PC-3 (cell line): ENCODE measurements at regions of chr6 and their contacts with region 1.

Region 1: DNA sequence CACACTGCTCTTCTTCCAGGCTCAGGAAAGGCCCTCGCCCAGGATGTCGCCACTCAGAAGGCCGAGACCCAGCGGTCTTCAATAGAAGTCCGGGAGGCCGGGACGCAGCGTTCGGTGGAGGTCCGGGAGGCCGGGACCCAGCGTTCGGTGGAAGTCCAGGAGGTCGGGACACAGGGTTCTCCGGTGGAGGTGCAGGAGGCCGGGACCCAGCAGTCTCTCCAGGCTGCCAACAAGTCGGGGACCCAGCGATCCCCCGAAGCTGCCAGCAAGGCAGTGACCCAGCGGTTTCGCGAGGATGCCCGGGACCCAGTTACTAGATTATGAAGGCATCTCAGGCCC is 1.0 kb downstream of the KHDC3L start:
- DNase-seq: no peak
- ATAC-seq: no peak
- H3K4me3 ChIP-seq: no peak overlapping the region
- H3K27ac ChIP-seq: no peak overlapping the region
- H3K4me1 ChIP-seq: no peaks in the 10 kb centered on the region
- H3K27me3 ChIP-seq: no peaks in the 10 kb centered on the region
- CTCF ChIP-seq: no peak

Region 2: GRCh38 chr6:73262671-73263569 is 100.6 kb before region 1 on chr6 and contains the start of gene KHDC1:
- CTCF ChIA-PET with region 1: no interaction called
- POLR2A ChIA-PET with region 1: interaction called, 19 read pairs
- intact Hi-C with region 1: no loop called
- DNase-seq: peak; percentile 13
- ATAC-seq: peak; percentile 78
- H3K4me3 ChIP-seq: peak within 1 kb of the TSS; percentile 72
- H3K27ac ChIP-seq: no peak within 1 kb of the TSS
- H3K4me1 ChIP-seq: peaks cover 24% of the 10 kb centered on the region
- H3K27me3 ChIP-seq: no peaks in the 10 kb centered on the region
- CTCF ChIP-seq: no peak
- total RNA-seq, gene KHDC1: 5.1 and 7.9 TPM in 2 replicates

Region 3: DNA sequence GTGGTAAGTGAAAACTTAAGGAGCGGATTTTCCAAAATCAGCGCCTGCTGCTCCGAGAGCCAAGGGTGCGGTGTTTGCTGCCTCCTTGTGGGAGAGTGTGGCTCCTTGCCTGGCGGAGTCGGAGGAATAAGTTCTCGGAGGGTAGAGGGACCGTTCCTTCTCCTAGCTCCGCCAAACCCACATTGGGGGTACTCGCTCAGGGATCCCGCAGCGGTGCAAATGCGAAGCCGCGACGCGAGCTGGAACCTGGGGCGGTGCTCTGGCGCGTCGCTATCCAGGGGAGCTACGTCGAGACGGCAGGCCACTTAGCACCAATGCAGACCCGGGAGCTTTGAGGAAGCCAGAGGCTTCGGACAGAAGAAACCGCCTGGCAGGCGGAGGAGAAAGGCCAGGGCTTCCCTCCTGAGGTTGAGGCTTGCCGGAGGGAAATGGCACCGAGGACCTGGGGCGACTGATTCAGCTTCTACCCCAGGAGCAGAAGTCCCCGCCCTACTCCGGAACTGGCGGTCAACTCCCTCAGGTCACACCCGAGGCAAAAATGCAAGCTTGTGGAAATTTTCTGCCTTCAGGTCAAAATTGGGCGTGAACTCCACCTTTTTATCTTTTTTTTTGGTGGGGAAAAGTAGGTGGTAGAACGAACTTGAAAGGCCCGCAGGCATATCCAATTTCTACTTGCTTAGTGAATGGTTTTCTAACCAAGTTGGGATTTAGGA is 25.4 kb after region 1 on chr6:
- CTCF ChIA-PET with region 1: no interaction called
- POLR2A ChIA-PET with region 1: no interaction called
- intact Hi-C with region 1: no loop called
- DNase-seq: peak; percentile 77
- ATAC-seq: peak; percentile 87
- H3K4me3 ChIP-seq: peak overlapping the region; percentile 79
- H3K27ac ChIP-seq: peak overlapping the region; percentile 85
- H3K4me1 ChIP-seq: no peaks in the 10 kb centered on the region
- H3K27me3 ChIP-seq: no peaks in the 10 kb centered on the region
- CTCF ChIP-seq: peak; percentile 73